A673 (cell line): ENCODE measurements at regions of chr11 and their contacts with region 1.

Region 1: DNA sequence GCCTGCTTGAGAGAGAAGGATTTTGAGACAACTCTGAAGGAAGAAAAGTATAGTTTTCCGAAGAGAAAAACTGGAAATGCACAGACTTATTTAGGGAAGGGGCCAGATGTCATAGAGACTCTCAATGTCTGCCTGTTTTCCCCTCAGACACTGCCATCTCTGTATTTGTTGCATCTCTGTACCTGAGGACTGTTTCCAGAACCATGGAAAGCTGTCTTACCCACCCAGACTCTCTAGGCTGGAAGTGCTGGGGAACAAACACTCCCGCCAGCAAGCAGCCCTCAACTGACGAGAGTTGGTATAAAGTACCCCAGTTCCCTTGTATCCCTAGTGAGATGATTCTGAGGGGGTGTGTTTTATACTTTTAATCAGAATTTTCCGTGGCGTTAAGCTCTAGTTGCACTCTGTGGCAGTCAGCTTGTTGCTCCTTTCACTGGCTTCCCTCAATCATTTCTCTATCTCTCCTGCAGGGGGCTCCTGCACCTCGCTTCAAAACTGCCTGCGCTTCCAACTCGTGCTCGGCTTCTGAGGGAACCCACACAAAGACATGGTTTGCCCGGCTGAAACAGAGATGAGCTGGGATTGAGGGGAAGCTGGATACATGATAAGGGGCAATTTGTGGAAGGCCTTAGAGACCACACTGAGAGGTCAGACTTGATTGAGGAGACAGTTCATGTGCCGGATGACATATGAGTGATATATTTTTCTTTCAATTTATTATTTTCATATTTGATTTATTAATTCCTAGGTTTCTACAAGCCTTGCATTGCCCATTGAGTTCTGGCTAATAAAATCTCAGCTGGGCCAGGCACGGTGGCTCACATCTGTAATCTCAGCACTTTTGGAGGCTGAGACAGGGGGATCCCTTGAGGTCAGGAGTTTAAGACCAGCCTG is 36.9 kb upstream of the CLPB start:
- DNase-seq: peak; percentile 90
- H3K4me3 ChIP-seq: no peak overlapping the region
- H3K27ac ChIP-seq: no peak overlapping the region
- H3K4me1 ChIP-seq: no peaks in the 10 kb centered on the region
- H3K27me3 ChIP-seq: peaks cover 19% of the 10 kb centered on the region
- CTCF ChIP-seq: peak; percentile 96

Region 2: GRCh38 chr11:71472357-71472893 is 998.8 kb before region 1 on chr11:
- CTCF ChIA-PET with region 1: no interaction called
- POLR2A ChIA-PET with region 1: no interaction called
- intact Hi-C with region 1: no loop called
- DNase-seq: no peak
- H3K4me3 ChIP-seq: no peak overlapping the region
- H3K27ac ChIP-seq: no peak overlapping the region
- H3K4me1 ChIP-seq: no peaks in the 10 kb centered on the region
- H3K27me3 ChIP-seq: no peaks in the 10 kb centered on the region
- CTCF ChIP-seq: no peak

Region 3: DNA sequence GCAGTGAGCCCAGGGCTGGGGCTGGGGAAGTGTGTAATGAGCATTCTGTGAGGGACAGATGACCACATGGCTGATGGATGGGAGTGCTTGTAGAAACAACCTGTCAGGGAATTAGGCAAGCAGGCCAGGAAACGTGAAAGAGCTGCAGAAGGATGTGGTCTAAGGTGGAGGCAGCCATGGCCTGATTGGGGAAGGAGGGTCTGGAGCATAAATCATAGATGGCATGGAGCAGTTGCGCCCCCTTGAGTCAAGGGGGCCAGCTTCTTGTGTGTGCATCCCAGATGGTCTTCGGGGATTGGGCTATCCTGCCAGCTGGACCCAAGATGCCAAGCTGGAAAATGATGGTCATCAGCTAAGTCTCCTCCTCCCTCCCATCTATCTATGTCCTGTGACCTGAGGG is 82.5 kb after region 1 on chr11:
- CTCF ChIA-PET with region 1: interaction called, 11 read pairs
- POLR2A ChIA-PET with region 1: no interaction called
- intact Hi-C with region 1: loop called (anchors 5 kb)
- DNase-seq: peak; percentile 48
- H3K4me3 ChIP-seq: no peak overlapping the region
- H3K27ac ChIP-seq: no peak overlapping the region
- H3K4me1 ChIP-seq: no peaks in the 10 kb centered on the region
- H3K27me3 ChIP-seq: peaks cover 5% of the 10 kb centered on the region
- CTCF ChIP-seq: peak; percentile 56

Region 4: DNA sequence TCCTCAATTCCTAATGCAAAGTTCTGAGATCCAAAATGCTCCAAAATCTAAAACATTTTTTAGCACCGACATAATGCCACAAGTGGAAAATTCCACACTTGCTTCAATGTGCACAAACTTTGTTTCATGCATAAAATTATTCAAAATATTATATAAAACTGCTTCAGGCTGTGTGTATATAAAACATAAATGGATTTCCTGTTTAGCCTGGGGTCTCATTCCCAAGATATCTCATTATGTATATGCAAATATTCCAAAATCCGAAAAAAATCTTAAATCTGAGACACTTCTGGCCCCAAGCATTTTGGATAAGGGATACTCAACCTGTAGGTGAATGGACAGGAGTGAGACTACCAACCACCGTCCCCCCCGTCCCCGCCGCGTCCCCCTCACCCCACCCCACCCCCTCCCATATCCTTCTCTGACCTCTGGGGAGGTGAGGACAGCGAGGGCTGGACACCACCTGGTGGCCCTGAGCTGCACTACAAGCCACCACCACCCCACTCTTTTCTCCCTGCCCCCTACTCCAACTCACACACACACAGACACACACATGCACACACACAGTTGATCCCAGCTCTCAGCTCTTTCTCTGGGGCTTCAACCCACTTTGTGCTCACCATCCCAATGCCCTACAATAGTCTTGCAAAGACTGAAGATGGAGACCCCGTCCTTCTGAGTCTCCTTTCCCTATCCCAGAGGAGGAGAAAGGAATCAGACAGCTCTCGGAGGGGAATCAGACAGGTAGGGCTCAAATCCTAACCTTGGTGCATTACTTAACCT is 102.0 kb after region 1 on chr11:
- CTCF ChIA-PET with region 1: interaction called, 20 read pairs
- POLR2A ChIA-PET with region 1: no interaction called
- intact Hi-C with region 1: no loop called
- DNase-seq: peak; percentile 42
- H3K4me3 ChIP-seq: no peak overlapping the region
- H3K27ac ChIP-seq: no peak overlapping the region
- H3K4me1 ChIP-seq: no peaks in the 10 kb centered on the region
- H3K27me3 ChIP-seq: no peaks in the 10 kb centered on the region
- CTCF ChIP-seq: peak; percentile 60

Region 5: DNA sequence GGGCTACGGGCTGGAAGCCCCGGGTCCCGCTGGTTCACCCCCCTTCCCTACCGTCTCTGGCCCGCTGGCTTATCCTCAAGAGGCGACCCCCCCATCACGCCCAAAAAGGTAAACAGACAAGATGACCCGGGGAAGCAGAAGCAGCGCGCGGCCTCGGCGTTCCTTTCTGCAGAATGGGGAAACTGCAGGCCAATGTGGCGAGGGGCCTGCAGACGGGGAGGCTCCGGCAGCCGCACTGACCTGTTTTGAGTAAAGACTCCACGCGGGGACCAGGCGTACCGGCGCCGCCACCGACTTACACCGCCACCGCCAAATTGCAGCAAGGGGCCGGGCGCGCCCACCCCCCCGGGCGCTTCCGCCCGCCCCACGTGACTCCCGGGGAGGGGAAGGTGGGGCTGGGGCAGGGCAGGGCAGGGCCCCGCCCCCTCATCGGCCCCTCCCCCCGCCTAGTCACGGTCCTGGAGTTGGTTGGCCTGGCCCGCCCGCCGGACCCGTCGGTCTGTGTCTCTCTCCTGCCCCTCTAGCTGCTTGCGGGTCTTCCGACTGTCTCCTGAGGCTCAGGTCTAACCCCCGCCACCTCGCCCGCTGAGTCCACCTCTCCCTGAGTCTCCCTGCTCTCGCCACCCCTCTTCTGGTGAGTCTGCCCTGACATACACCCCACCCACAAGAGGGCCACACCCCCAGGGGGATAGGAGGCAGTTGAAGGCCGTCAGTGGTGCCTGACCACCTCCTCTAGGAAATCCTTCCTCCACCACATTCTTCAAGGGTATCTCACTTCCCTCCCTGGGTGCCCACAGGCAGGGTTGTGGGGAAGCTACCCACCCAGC is 281.0 kb after region 1 on chr11 and contains the start of gene ARAP1:
- CTCF ChIA-PET with region 1: no interaction called
- POLR2A ChIA-PET with region 1: no interaction called
- intact Hi-C with region 1: no loop called
- DNase-seq: peak; percentile 86
- H3K4me3 ChIP-seq: peak within 1 kb of the TSS; percentile 90
- H3K27ac ChIP-seq: peak within 1 kb of the TSS; percentile 68
- H3K4me1 ChIP-seq: peaks cover 19% of the 10 kb centered on the region
- H3K27me3 ChIP-seq: no peaks in the 10 kb centered on the region
- CTCF ChIP-seq: no peak
- total RNA-seq, gene ARAP1: 66.1 and 68.4 TPM in 2 replicates